Right ventricle myocardium inferior (tissue), 1 donor: ENCODE measurements at regions of chr6 and their contacts with region 1.

Region 1: DNA sequence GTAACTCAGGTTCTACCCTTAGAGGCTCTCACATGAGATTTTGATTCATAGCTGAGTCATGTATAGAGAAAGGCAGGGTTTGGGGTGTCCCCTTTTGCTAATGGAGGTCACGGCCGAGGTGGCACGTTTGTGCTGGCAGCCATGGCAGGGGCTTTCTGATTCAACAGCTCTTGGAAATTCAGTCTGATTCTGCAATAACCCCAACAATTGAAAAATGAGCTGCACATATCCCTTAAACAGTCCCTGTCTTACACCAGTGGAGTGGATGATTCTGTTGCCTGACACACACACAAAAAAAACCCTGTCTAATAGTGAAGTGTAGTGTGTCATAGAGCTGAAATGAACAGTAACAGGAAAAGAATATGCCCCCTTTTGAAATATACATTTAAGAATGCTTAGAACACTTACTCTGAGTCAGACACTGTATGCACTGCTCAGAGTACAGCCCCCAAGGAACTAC is 40.4 kb upstream of the ARG1 start:
- DNase-seq: no peak
- ATAC-seq: no peak

Region 2: DNA sequence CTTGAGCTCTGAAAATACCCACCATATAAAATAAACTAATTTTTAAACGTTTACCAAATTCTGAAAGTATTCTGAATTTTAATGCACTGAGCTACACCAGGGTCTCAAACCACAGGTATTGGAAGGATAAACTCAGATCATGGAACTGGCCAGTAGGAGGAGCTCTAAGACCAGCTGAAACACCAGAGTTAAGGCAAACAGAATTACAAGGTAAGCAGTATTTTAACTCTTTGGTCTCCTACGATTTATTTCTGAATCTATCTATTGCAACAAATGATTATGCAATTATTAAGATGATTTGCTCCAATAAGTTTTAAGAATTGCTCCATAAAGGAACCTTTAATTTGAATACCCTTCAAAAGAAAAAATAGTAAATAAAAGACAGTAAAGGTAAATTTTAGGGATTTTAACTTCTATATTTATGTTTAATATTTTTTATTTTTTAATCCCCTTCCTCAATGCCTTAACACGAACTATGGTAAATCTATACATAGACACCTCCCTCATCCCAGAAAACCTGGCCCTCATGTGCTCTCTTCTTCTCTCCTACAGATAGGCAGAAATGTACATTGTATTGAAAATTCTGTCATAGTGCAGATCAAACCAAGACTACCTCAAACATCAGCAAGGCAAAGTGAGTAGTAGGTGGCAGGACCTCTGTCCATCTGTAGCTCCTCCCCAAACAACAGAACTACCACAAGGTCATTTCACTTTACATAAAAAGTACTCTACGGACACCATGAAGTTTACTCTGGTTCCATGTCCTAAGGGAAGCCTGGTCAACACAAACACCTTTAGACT is 647.0 kb before region 1 on chr6:
- intact Hi-C with region 1: loop called (anchors 2 kb)
- DNase-seq: no peak
- ATAC-seq: peak; percentile 85

Region 3: GRCh38 chr6:131199568-131200272 is 332.9 kb before region 1 on chr6:
- intact Hi-C with region 1: loop called (anchors 2 kb)
- DNase-seq: no peak
- ATAC-seq: peak; percentile 48